MCF 10A (cell line): ENCODE measurements at regions of chr1 and their contacts with region 1.

Region 1: DNA sequence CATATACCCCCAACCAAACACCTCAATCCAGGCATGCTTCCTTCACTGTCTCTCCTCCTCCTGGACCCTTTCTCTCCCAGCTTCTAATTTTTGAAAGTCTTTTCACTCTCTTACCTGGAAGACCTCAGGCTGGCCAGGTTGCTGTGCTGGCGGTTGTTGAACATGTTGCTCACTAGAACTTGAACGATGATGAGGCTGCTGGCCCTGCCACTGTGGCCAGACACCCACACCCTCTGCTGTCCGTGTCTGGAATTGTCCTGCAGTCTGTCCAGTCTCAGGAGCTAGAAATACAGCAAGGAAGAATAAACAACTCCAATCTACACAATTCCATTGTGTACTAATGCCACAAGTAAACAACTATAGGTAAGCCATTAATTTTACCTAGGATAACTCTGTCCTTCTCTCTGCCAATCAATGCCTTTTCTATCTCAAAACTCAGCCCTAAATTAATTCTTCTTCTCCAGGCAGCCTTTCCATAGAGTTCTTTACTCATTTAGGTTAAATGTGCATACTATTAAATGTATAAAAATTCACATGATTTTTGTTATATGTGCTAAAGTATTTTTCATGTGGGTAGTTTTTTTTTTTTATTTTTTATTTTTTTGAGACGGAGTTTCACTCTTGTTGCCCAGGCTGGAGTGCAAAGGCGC is 5.1 kb upstream of the CTSK start:
- DNase-seq: peak; percentile 74
- H3K4me3 Mint-ChIP-seq: no peak overlapping the region
- H3K27ac Mint-ChIP-seq: no peak overlapping the region
- H3K4me1 Mint-ChIP-seq: no peaks in the 10 kb centered on the region
- H3K27me3 Mint-ChIP-seq: no peaks in the 10 kb centered on the region
- CTCF ChIP-seq: peak; percentile 94

Region 2: GRCh38 chr1:150259758-150260669 is 553.2 kb before region 1 on chr1:
- CTCF ChIA-PET with region 1: interaction called, 4 read pairs
- POLR2A ChIA-PET with region 1: no interaction called
- intact Hi-C with region 1: loop called (anchors 5 kb)
- DNase-seq: peak; percentile 89
- H3K4me3 Mint-ChIP-seq: peak overlapping the region; percentile 64
- H3K27ac Mint-ChIP-seq: peak overlapping the region; percentile 47
- H3K4me1 Mint-ChIP-seq: peaks cover 66% of the 10 kb centered on the region
- H3K27me3 Mint-ChIP-seq: no peaks in the 10 kb centered on the region
- CTCF ChIP-seq: no peak

Region 3: GRCh38 chr1:150548632-150549495 is 264.3 kb before region 1 on chr1 and contains the start of gene ADAMTSL4:
- CTCF ChIA-PET with region 1: interaction called, 13 read pairs
- POLR2A ChIA-PET with region 1: interaction called, 5 read pairs
- intact Hi-C with region 1: no loop called
- DNase-seq: peak; percentile 80
- H3K4me3 Mint-ChIP-seq: peak within 1 kb of the TSS; percentile 81
- H3K27ac Mint-ChIP-seq: peak within 1 kb of the TSS; percentile 78
- H3K4me1 Mint-ChIP-seq: peaks cover 28% of the 10 kb centered on the region
- H3K27me3 Mint-ChIP-seq: no peaks in the 10 kb centered on the region
- CTCF ChIP-seq: peak; percentile 15
- total RNA-seq, gene ADAMTSL4: 9.6 and 13.3 TPM in 2 replicates

Region 4: GRCh38 chr1:150578965-150579798 is 234.0 kb before region 1 on chr1 and contains the start of gene MCL1:
- CTCF ChIA-PET with region 1: interaction called, 6 read pairs
- POLR2A ChIA-PET with region 1: interaction called, 12 read pairs
- intact Hi-C with region 1: no loop called
- DNase-seq: peak; percentile 98
- H3K4me3 Mint-ChIP-seq: peak within 1 kb of the TSS; percentile 99
- H3K27ac Mint-ChIP-seq: peak within 1 kb of the TSS; percentile 99
- H3K4me1 Mint-ChIP-seq: peaks cover 35% of the 10 kb centered on the region
- H3K27me3 Mint-ChIP-seq: no peaks in the 10 kb centered on the region
- CTCF ChIP-seq: no peak
- total RNA-seq, gene MCL1: 497 and 624 TPM in 2 replicates

Region 5: DNA sequence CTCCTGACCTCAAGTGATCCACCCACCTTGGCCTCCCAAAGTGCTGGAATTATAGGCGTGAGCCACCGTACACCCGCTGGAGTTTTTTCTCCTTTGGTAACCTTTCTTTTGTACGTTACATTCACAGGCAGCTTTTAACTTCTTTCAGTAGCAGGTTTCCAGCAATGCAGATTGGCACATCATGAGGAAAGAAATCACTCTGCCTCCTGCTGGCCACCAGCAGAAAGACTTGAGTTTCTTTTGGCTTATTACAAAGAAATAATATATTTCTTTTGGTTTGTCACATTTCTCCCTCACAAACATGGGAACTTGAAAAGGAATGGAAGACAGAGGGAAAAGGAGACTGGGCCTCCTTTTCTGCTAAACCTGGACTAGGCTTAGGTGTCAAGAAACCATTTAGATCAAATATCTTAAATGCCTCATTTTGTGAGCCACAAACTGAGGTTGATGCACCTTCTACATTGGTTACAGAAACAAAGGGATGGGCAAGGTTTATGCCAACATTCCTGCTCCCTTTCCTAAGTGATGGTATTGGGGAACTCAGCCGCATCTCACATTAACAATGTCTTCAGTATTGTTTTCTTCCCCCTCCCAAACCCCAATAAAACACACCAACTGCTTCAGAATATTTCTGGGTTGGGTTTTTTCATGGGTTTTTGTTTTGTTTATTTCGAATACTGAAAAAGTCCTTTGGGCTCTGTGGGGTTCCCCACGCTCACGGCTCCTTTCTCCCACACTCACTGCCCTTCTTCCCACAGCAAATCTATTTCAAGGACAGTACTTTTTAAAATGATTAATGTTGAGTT is 191.5 kb before region 1 on chr1:
- CTCF ChIA-PET with region 1: interaction called, 24 read pairs
- POLR2A ChIA-PET with region 1: interaction called, 5 read pairs
- intact Hi-C with region 1: loop called (anchors 1 kb)
- DNase-seq: peak; percentile 79
- H3K4me3 Mint-ChIP-seq: no peak overlapping the region
- H3K27ac Mint-ChIP-seq: peak overlapping the region; percentile 33
- H3K4me1 Mint-ChIP-seq: peaks cover 62% of the 10 kb centered on the region
- H3K27me3 Mint-ChIP-seq: no peaks in the 10 kb centered on the region
- CTCF ChIP-seq: peak; percentile 83

Region 6: DNA sequence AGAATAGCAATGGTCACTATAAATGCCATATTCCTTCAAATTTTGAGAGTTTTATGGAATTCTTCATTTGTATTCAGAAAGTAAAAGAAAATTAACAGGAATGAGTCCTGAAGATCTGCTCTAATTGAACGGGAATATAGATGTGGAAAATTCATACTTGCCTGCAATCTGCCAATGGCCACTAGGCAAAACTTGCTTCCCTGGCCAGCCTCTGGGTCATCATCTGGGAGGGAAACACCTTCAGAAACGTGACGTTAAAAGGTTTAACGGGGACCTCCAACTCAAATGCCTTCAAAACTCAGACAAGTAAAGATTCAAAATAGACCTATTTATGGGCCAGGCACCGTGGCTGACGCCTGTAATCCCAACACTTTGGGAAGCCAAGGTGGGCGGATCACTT is 16.6 kb after region 1 on chr1:
- CTCF ChIA-PET with region 1: interaction called, 15 read pairs
- POLR2A ChIA-PET with region 1: interaction called, 5 read pairs
- intact Hi-C with region 1: no loop called
- DNase-seq: no peak
- H3K4me3 Mint-ChIP-seq: no peak overlapping the region
- H3K27ac Mint-ChIP-seq: no peak overlapping the region
- H3K4me1 Mint-ChIP-seq: no peaks in the 10 kb centered on the region
- H3K27me3 Mint-ChIP-seq: no peaks in the 10 kb centered on the region
- CTCF ChIP-seq: peak; percentile 39

Region 7: DNA sequence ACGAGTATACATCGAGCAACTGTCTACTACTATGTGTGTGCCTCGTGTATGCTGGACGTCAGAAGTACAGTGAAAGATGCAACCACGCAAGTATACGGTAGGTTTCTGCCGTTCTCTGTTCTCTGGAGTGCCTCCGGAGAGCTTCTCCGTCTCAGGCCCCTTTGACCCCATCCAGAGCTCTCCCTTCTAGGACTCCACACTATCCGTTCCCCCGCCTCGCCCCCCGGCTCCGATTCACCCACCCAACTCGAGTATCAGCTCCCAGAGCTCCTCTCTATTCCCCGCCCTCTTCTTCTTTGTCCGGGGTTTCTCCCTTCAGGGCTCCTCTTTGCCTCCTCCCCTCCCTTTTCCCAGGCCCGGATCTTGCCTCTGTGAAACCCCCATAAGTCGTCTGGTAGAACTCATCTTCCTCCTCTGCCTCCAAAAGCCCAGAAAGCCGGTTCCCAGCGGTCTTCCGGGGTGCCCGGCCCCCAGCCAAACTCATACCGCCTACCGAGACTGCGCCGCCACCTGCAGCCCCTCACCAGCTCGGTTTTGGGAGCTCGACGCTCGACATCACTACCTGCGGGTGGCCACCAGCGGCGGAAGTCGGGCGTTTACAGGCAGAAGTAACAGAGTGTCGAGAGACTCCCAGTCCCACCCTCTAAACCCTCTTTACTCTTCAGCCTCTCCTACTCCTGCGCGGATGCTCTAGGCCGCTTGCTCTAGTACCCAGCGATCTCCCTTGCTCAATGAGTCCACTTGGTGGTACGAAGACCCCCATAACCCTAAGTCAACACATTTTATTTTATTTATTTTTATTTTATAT is 376.7 kb after region 1 on chr1 and contains the start of gene VPS72:
- CTCF ChIA-PET with region 1: no interaction called
- POLR2A ChIA-PET with region 1: no interaction called
- intact Hi-C with region 1: no loop called
- DNase-seq: peak; percentile 93
- H3K4me3 Mint-ChIP-seq: peak within 1 kb of the TSS; percentile 83
- H3K27ac Mint-ChIP-seq: peak within 1 kb of the TSS; percentile 90
- H3K4me1 Mint-ChIP-seq: peaks cover 33% of the 10 kb centered on the region
- H3K27me3 Mint-ChIP-seq: no peaks in the 10 kb centered on the region
- CTCF ChIP-seq: no peak
- total RNA-seq, gene VPS72: 106 and 108 TPM in 2 replicates